ENCODE measurements at regions of chr1 and their contacts with region 1.

Region 1: GRCh38 chr1:23098463-23099170 is 70.0 kb downstream of the LUZP1 start:
- DNase-seq: peak; percentile 74
- ATAC-seq: peak; percentile 17
- H3K4me3 Mint-ChIP-seq: no peak overlapping the region
- H3K27ac Mint-ChIP-seq: no peak overlapping the region
- H3K4me1 Mint-ChIP-seq: peaks cover 45% of the 10 kb centered on the region
- H3K27me3 Mint-ChIP-seq: no peaks in the 10 kb centered on the region

Region 2: DNA sequence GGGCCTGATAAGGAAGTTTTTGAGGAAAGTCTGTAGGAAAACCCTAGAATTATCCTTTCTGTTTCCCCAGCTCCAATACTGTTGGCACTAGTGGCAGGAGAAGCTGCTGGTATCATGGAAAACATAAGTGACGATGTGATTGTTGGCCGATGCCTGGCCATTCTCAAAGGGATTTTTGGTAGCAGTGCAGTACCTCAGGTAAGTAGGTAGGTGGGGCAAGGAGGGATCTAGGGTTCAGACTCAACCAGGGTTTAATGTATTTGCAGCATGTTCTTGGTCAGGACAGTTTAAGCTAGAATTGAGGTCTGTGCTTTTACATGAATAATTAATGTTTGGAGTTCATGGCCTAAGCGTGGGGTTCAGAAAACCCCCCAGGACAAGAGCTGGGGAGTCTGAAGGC is 17.2 kb before region 1 on chr1:
- CTCF ChIA-PET with region 1: interaction called, 26 read pairs
- POLR2A ChIA-PET with region 1: no interaction called
- intact Hi-C with region 1: no loop called
- DNase-seq: no peak
- ATAC-seq: peak; percentile 36
- H3K4me3 Mint-ChIP-seq: no peak overlapping the region
- H3K27ac Mint-ChIP-seq: no peak overlapping the region
- H3K4me1 Mint-ChIP-seq: no peaks in the 10 kb centered on the region
- H3K27me3 Mint-ChIP-seq: no peaks in the 10 kb centered on the region

Region 3: GRCh38 chr1:23122023-23122748 is 23.6 kb after region 1 on chr1:
- CTCF ChIA-PET with region 1: interaction called, 27 read pairs
- POLR2A ChIA-PET with region 1: interaction called, 3 read pairs
- intact Hi-C with region 1: no loop called
- DNase-seq: no peak
- ATAC-seq: no peak
- H3K4me3 Mint-ChIP-seq: no peak overlapping the region
- H3K27ac Mint-ChIP-seq: no peak overlapping the region
- H3K4me1 Mint-ChIP-seq: peaks cover 49% of the 10 kb centered on the region
- H3K27me3 Mint-ChIP-seq: no peaks in the 10 kb centered on the region

Region 4: GRCh38 chr1:23149114-23149513 is 50.5 kb after region 1 on chr1:
- CTCF ChIA-PET with region 1: interaction called, 10 read pairs
- POLR2A ChIA-PET with region 1: interaction called, 3 read pairs
- intact Hi-C with region 1: loop called in 1 of 2 experiments (anchors 5 kb)
- DNase-seq: no peak
- ATAC-seq: no peak
- H3K4me3 Mint-ChIP-seq: no peak overlapping the region
- H3K27ac Mint-ChIP-seq: no peak overlapping the region
- H3K4me1 Mint-ChIP-seq: peaks cover 20% of the 10 kb centered on the region
- H3K27me3 Mint-ChIP-seq: no peaks in the 10 kb centered on the region

Region 5: DNA sequence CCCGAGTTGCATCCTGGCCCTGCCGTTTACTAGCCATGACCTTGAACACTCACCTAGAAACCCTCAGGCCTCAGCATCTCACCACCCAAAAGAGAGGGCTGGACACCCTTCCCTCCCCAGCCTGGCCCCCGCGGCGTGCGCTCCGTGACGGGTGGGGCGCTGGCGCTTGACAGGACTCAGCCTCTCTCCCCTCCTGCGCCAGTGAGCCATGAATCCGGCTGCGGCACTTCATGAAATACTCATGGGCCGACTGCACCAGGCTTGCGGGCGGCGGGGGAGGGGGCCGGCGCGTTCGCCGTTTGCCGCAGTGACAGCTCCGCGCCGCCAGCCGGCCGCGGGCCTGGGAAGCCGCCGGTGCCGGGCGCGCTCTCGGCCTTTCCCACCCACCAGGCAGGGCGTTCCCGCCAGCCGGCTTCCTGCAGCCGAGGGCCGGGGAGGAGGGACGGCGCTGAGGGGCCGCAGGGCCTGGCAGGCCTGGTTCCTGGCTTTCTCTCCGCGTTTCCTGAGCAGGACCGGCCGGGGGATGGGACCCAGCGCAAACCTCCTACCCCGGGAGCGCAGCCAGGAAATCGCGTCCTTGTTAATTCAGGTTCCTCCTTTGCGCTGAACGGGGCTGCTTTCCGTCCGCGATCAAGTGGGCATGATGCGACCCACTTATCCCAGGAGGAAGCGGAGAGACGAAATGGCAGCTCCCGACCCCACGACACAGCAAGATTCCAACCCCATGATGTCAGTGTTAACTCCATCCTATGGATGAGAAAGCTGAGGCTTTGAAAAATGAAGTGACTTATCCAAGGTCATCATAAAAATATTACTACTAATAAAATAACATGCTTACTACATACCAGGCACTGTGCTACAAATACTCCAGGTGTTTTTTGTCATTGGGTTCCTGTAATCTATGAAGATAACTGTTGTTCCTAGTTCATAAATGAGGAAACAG is 79.1 kb after region 1 on chr1:
- CTCF ChIA-PET with region 1: interaction called, 547 read pairs
- POLR2A ChIA-PET with region 1: interaction called, 3 read pairs
- intact Hi-C with region 1: no loop called
- DNase-seq: peak; percentile 74
- ATAC-seq: peak; percentile 80
- H3K4me3 Mint-ChIP-seq: peak overlapping the region; percentile 54
- H3K27ac Mint-ChIP-seq: no peak overlapping the region
- H3K4me1 Mint-ChIP-seq: peaks cover 12% of the 10 kb centered on the region
- H3K27me3 Mint-ChIP-seq: peaks cover 19% of the 10 kb centered on the region

Region 6: DNA sequence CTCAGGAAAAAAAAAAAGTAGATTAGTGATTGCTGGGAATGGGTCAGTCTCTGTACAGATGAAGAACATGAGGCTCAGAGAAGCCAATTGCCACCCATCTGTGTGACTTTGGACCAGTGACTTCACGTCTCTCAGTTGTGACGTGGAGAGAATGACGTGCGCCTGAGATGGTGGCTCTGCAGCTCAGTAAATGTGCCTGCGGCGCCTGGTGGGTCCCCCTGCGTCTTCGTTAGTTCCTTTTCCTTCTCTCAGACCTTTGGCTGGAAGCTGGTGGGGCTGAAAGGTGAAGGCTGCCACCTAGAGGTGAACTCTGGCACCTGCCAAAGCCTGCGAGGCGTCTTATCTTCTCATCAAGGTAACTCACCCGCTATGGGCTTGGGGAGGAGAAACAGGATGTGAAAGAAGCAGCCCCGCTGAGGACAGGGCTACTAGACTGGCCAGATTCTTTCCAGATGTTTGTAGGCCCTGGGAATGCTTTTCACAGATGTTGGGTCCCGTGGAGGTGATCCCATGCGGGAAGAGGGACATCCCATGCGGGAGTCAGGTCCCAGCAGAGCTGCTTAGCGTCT is 441.2 kb after region 1 on chr1:
- CTCF ChIA-PET with region 1: no interaction called
- POLR2A ChIA-PET with region 1: no interaction called
- intact Hi-C with region 1: loop called in 1 of 2 experiments (anchors 10 kb)
- DNase-seq: peak; percentile 95
- ATAC-seq: peak; percentile 95
- H3K4me3 Mint-ChIP-seq: peak overlapping the region; percentile 18
- H3K27ac Mint-ChIP-seq: peak overlapping the region; percentile 61
- H3K4me1 Mint-ChIP-seq: peaks cover 13% of the 10 kb centered on the region
- H3K27me3 Mint-ChIP-seq: no peaks in the 10 kb centered on the region